ENCODE measurements at regions of chr1 and their contacts with region 1.

Region 1: GRCh38 chr1:188782219-188782841 is 1695.3 kb downstream of the BRINP3 start:
- DNase-seq: no peak
- ATAC-seq: peak; percentile 99
- H3K4me3 ChIP-seq: no peak overlapping the region
- H3K27ac ChIP-seq: no peak overlapping the region
- H3K4me1 ChIP-seq: no peaks in the 10 kb centered on the region
- H3K27me3 ChIP-seq: no peaks in the 10 kb centered on the region
- CTCF ChIP-seq: peak; percentile 40 to 64 (median 50); a peak in 4 of 6 replicates
- EP300 ChIP-seq: no peak
- POLR2A ChIP-seq: no peak
- RAD21 ChIP-seq: peak; percentile 41; the same call in 1 of the 2 replicates

Region 2: GRCh38 chr1:188794969-188795368 is 12.6 kb after region 1 on chr1:
- CTCF ChIA-PET with region 1: interaction called, 11 read pairs
- POLR2A ChIA-PET with region 1: no interaction called
- RAD21 ChIA-PET with region 1: interaction called, 4 read pairs
- SMC1A ChIA-PET with region 1: no interaction called
- in situ Hi-C with region 1: no loop called
- intact Hi-C with region 1: no loop called
- DNase-seq: no peak
- ATAC-seq: no peak
- H3K4me3 ChIP-seq: no peak overlapping the region
- H3K27ac ChIP-seq: no peak overlapping the region
- H3K4me1 ChIP-seq: no peaks in the 10 kb centered on the region
- H3K27me3 ChIP-seq: no peaks in the 10 kb centered on the region
- CTCF ChIP-seq: no peak
- EP300 ChIP-seq: no peak
- POLR2A ChIP-seq: no peak
- RAD21 ChIP-seq: no peak

Region 3: GRCh38 chr1:188958451-188959115 is 176.3 kb after region 1 on chr1:
- CTCF ChIA-PET with region 1: no interaction called
- POLR2A ChIA-PET with region 1: no interaction called
- RAD21 ChIA-PET with region 1: no interaction called
- SMC1A ChIA-PET with region 1: no interaction called
- in situ Hi-C with region 1: no loop called
- intact Hi-C with region 1: no loop called
- DNase-seq: no peak
- ATAC-seq: peak; percentile 71
- H3K4me3 ChIP-seq: no peak overlapping the region
- H3K27ac ChIP-seq: no peak overlapping the region
- H3K4me1 ChIP-seq: no peaks in the 10 kb centered on the region
- H3K27me3 ChIP-seq: no peaks in the 10 kb centered on the region
- CTCF ChIP-seq: no peak; a peak in 1 of 6 replicates
- EP300 ChIP-seq: no peak
- POLR2A ChIP-seq: no peak
- RAD21 ChIP-seq: no peak